Posterior cingulate gyrus (tissue), 11 donors: ENCODE measurements at regions of chr11 and their contacts with region 1.

Region 1: GRCh38 chr11:134863294-134863693 is 451.3 kb upstream of the B3GAT1 start:
- DNase-seq: no peak

Region 2: DNA sequence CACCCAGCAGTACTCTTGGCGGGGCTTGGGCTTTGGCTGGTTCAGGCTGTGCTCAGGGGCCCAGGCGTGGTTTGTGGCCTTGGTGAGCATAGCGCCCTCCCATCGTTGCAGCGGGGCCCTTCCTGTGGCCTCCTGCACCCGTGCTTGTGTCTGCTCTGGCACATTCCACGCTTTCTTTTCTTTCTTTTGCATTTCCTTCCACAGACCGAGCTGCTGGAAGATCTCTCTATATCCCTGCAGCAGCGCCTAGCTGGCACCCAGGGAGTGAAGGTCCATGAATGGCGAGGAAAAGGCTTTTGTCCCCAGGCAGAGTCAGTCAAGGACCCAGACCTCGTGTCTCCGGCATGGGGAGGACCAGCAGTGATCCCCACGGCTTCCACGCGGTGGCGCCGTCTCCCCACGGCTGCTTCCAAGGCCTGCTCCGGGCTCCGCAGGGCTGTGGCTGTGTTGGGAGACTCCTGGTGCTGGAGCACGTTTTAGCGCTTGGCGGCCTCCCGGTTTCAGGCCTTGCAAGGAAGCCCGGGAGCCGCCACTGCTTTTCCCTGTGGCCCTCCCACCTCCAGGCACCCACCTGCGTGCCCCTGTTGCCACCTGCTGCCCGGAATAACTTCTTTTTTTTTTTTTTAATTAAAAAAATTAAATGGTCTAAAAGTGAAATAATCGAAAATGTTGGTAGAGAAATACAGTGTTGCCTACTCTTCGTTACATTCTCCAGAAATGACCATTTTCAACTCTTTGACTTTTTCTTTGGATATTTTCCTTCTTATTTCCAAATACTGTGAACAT is 503.1 kb before region 1 on chr11:
- intact Hi-C with region 1: loop called (anchors 5 kb)
- DNase-seq: peak; percentile 81 to 99 (median 92)

Region 3: DNA sequence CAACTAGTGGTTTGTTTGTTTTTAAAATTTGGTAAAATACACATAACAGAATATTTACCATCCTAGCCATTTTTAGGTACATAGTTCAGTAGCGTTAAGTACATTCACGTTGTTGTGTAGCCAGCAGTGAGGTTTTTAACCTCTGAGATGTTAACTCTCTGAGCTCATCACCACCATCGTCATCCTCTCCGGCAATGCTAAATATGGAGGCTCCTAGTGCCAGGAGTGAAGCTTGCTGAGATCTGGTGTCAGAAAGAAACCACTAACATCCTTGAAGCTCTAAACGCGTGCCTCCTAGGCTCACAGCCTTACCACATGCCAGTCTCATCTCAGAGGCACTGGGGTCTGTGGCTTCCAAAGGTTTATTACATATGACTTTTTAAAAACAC is 121.1 kb before region 1 on chr11:
- intact Hi-C with region 1: no loop called
- DNase-seq: no peak

Region 4: DNA sequence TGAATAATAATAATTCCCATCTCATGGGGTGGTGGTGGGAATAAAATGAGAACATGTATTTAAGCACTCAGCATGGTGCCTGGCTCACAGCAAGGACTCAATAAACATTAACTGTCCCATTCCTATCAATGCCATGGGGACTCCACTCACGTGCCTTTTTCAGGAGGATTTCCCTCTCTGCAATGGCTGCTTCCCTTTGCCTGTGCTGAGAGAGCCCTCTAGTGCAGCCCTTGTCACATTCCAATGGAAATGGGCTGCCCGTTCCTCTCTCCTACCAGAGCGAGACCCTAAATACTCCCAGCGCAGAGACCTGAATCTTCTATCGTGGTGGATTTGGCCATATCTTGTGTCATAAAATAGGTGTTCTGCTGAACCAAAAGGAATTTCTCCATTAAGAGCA is 170.2 kb after region 1 on chr11:
- intact Hi-C with region 1: loop called (anchors 1 kb)
- DNase-seq: peak in 8 of 10 donors; percentile 35 to 93 (median 64)